ENCODE measurements at regions of chr13 and their contacts with region 1.

Region 1: GRCh38 chr13:75621147-75621546 is 15.0 kb upstream of the LMO7 start:
- DNase-seq: peak; percentile 36
- H3K4me3 ChIP-seq: no peak overlapping the region
- H3K27ac ChIP-seq: no peak overlapping the region
- H3K4me1 ChIP-seq: peaks cover 8% of the 10 kb centered on the region
- H3K27me3 ChIP-seq: no peaks in the 10 kb centered on the region
- CTCF ChIP-seq: no peak
- POLR2A ChIP-seq: no peak

Region 2: DNA sequence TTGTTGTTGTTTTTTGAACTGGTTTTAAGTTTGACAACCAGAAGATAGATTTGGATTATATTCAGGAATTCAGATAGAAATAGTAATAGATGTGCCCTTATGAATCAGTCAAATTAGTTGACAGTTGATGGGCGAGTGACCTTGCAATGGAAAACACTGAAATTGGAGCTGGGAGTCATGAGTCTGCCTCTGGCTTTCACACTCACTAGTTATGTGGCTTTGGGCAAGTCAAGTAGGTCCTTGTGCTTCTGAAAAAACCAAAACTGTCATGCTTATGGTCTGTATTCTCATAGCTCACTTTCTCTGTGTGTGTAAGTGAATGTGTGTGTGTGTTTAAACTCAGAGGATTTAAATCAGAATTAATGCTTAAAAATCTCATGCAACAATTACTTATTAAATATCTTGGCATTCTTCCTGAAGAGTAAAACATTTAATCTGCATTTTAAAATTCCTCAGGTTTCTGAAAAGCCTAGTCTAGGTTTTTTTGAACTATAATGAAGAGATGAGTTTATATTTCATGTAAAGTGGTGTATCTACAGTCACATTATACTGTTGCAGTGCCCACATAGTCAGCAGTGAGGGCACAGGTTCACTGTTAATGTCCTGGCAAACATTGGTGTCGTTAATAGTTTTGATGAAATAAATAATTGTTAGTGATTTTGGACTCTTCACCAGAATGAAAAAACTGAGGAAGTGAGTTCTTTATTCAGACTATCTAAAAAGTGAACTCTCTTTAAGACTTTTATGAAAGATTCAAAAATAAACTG is 39.1 kb before region 1 on chr13:
- CTCF ChIA-PET with region 1: no interaction called
- POLR2A ChIA-PET with region 1: no interaction called
- dilution Hi-C with region 1: no loop called
- intact Hi-C with region 1: loop called (anchors 5 kb)
- DNase-seq: no peak
- H3K4me3 ChIP-seq: no peak overlapping the region
- H3K27ac ChIP-seq: no peak overlapping the region
- H3K4me1 ChIP-seq: no peaks in the 10 kb centered on the region
- H3K27me3 ChIP-seq: no peaks in the 10 kb centered on the region
- CTCF ChIP-seq: no peak
- POLR2A ChIP-seq: no peak

Region 3: GRCh38 chr13:75635828-75636435 is 14.8 kb after region 1 on chr13 and contains the start of gene LMO7:
- CTCF ChIA-PET with region 1: no interaction called
- POLR2A ChIA-PET with region 1: no interaction called
- dilution Hi-C with region 1: no loop called
- intact Hi-C with region 1: loop called (anchors 2 kb)
- DNase-seq: peak; percentile 15
- H3K4me3 ChIP-seq: peak within 1 kb of the TSS; percentile 44 to 62 (median 56)
- H3K27ac ChIP-seq: no peak within 1 kb of the TSS
- H3K4me1 ChIP-seq: peaks cover 9% of the 10 kb centered on the region
- H3K27me3 ChIP-seq: no peaks in the 10 kb centered on the region
- CTCF ChIP-seq: no peak
- POLR2A ChIP-seq: no peak
- total RNA-seq, gene LMO7: 21.1 and 43.6 TPM in 2 replicates